Caco-2 (cell line): ENCODE measurements at regions of chr17 and their contacts with region 1.

Region 1: DNA sequence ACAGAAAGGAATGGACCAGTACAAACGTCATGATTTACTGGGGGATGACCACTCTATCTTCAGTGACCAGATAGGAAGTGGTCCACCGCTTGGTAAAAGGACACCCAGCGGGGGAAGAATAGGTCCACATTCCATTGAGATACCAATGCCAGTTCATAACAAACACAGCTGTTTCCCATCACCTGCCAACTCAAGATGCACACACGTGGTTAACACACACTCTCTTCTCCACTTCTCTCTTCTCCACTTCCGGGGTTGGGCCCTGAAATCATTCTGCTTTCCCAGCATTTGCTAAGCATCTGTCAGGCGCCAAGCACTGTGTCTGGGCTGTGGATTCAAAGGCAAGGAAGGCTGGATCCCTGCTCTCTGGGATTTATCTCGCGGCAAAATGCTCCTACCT is 175.5 kb downstream of the SLC39A11 start:
- DNase-seq: no peak
- H3K4me3 ChIP-seq: no peak overlapping the region
- H3K4me3 Mint-ChIP-seq: no peak overlapping the region
- H3K27ac Mint-ChIP-seq: no peak overlapping the region
- H3K4me1 ChIP-seq: no peaks in the 10 kb centered on the region
- H3K4me1 Mint-ChIP-seq: no peaks in the 10 kb centered on the region
- H3K27me3 ChIP-seq: no peaks in the 10 kb centered on the region
- H3K27me3 Mint-ChIP-seq: no peaks in the 10 kb centered on the region
- CTCF ChIP-seq: no peak

Region 2: DNA sequence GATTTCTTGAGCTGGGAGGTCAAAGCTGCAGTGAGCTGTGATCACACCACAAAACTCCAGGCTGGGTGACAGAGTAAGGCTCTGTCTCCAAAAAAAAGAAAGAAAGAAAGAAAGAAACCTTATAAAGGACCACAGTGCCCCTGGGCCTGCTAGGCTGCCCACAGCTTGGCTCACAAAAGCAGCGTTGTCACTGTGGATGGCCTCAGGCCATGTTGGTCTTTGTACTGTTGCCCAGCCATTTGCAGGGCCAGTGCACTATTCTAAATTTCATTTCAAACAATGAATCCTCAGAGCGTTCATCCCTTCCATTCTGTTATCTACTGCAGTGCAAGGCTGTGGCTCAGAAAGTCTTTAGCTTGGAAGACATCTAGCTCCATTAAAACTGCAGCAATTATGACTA is 32.9 kb before region 1 on chr17:
- CTCF ChIA-PET with region 1: no interaction called
- POLR2A ChIA-PET with region 1: no interaction called
- intact Hi-C with region 1: no loop called
- DNase-seq: no peak
- H3K4me3 ChIP-seq: no peak overlapping the region
- H3K4me3 Mint-ChIP-seq: no peak overlapping the region
- H3K27ac Mint-ChIP-seq: no peak overlapping the region
- H3K4me1 ChIP-seq: no peaks in the 10 kb centered on the region
- H3K4me1 Mint-ChIP-seq: no peaks in the 10 kb centered on the region
- H3K27me3 ChIP-seq: no peaks in the 10 kb centered on the region
- H3K27me3 Mint-ChIP-seq: no peaks in the 10 kb centered on the region
- CTCF ChIP-seq: no peak

Region 3: GRCh38 chr17:73068322-73069153 is 151.5 kb after region 1 on chr17:
- CTCF ChIA-PET with region 1: interaction called, 12 read pairs
- POLR2A ChIA-PET with region 1: no interaction called
- intact Hi-C with region 1: no loop called
- DNase-seq: peak; percentile 65 to 70
- H3K4me3 ChIP-seq: no peak overlapping the region
- H3K4me3 Mint-ChIP-seq: peak overlapping the region; percentile 0
- H3K27ac Mint-ChIP-seq: peak overlapping the region; percentile 2
- H3K4me1 ChIP-seq: peaks cover 13% of the 10 kb centered on the region; the same call in 1 of the 2 replicates
- H3K4me1 Mint-ChIP-seq: peaks cover 10% of the 10 kb centered on the region
- H3K27me3 ChIP-seq: no peaks in the 10 kb centered on the region
- H3K27me3 Mint-ChIP-seq: no peaks in the 10 kb centered on the region
- CTCF ChIP-seq: no peak